SK-N-SH (cell line): ENCODE measurements at regions of chr6 and their contacts with region 1.

Region 1: DNA sequence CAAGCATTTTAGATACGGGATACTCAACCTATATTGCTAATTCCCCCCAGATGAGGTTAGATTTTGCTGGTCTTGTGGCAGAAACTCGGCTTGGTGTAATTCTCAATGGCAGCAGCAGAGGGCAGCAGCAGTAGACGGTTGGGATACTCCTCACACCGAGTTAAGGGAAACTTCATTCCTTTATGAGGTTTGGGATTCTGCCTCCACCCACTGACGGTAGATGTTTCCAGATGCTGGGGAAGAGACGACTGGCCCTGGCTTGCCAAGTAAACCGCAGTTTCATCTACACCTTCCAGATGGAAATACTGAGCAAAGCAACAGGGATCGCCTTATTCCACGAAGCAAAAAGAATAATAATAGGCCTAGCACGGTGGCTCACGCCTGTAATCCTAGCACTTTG is 8.2 kb upstream of the TBC1D7 start:
- DNase-seq: peak; percentile 80
- H3K4me3 ChIP-seq: no peak overlapping the region; a peak in 1 of 4 replicates
- H3K27ac ChIP-seq: no peak overlapping the region
- H3K4me1 ChIP-seq: peaks cover 0 to 4% of the 10 kb centered on the region in 2 experiments; a peak in 2 of 4 replicates
- H3K27me3 ChIP-seq: no peaks in the 10 kb centered on the region
- CTCF ChIP-seq: peak; percentile 91
- EP300 ChIP-seq: no peak
- RAD21 ChIP-seq: peak; percentile 99

Region 2: DNA sequence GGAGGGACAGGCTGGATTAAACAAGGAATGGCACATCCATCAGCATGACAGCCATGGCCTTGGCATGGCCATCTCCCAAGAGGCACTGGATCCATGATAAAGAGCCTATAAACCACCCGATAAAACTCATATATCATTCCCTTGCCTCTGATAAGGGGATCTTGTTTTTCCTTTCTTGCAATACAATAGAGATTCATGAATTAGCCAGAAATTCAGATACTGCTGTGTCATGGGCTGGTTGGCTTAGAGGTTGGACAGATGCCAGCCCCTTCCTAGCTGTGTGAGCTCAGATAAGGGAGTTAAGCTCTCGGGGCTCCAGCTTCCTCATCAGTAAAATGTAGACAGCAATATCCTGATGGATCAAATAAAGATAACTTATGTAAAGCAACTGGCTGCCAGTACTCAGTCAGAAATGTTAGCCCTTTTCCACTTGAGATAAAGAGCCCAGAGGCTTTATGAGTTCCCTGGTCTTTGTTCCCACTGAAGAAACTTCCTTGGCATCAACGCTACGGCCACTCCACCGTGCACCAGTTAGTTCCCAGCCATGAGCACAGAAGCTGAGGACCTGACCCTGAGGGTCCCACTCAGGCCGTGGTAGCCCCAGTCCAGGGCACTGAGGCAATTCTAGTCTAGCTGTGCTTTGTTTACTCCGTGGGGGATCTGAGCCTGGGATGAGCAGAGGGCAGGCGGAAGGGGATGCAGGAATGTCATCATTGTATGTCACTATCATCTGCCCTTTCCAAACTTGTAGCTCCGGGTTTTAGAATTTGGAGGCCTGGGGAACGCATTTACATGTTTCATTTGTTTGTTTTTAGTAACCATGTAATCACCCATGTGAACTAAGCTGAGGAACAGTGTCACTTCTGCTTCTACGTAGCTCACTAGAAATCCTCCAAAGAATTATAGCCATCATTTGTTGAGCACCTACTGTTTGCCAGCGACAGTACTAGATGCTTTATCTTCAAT is 59.0 kb after region 1 on chr6:
- CTCF ChIA-PET with region 1: no interaction called
- POLR2A ChIA-PET with region 1: no interaction called
- DNase-seq: peak; percentile 65
- H3K4me3 ChIP-seq: no peak overlapping the region
- H3K27ac ChIP-seq: peak overlapping the region in 1 of 2 experiments; percentile 64; a peak in 2 of 4 replicates
- H3K4me1 ChIP-seq: peaks cover 8 to 12% of the 10 kb centered on the region in 2 experiments; a peak in 3 of 4 replicates
- H3K27me3 ChIP-seq: no peaks in the 10 kb centered on the region
- CTCF ChIP-seq: no peak
- EP300 ChIP-seq: no peak; a peak in 1 of 4 replicates
- RAD21 ChIP-seq: no peak

Region 3: GRCh38 chr6:13538084-13538483 is 201.5 kb after region 1 on chr6:
- CTCF ChIA-PET with region 1: interaction called, 13 read pairs
- POLR2A ChIA-PET with region 1: no interaction called
- DNase-seq: peak; percentile 69
- H3K4me3 ChIP-seq: no peak overlapping the region
- H3K27ac ChIP-seq: no peak overlapping the region
- H3K4me1 ChIP-seq: no peaks in the 10 kb centered on the region; a peak in 1 of 4 replicates
- H3K27me3 ChIP-seq: no peaks in the 10 kb centered on the region
- CTCF ChIP-seq: peak; percentile 59
- EP300 ChIP-seq: no peak
- RAD21 ChIP-seq: peak; percentile 70